Activated B cell treated with CpG ODN at 0.5 μM for 24 hours (primary cell): ENCODE measurements at regions of chr1 and their contacts with region 1.

Region 1: DNA sequence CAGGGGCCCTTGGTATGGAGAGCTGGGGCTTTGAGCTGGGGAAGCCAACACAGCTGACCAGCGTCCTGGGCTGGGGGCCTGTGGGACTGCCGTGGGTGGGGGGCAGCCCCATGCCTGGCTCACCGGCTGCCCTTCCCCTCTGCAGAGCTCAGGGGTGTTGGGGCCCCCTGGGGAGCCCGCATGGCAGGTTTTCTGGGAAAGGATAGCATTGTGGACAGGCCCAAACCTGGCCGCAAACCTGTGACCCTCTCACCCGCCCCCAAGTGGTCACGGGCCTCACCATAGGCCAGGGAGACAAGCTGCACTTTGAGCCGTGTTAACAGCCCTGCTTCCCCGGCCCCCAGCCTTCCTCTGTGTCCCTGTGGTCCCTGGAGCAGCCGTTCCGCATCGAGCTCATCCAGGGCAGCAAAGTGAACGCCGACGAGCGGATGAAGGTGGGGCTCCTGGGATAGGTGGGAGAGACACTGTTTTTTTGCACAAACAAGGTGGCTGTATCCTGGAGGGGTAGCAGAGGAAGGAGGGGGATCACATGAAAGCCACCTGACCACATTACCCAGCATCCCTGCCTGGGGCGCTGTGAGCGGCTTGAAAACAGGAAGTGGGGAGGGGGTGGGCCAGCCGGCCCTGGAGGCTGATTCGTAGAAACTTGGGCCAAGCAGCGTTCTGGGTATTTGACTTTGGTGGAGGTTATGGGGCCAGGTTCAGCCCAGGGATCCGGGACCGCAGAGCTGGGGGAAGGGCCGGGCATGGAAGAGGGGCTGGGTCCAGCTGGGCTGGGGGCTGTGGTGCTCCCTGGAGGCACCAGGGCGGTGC is 65.9 kb downstream of the PIK3CD start:
- DNase-seq: peak; percentile 68
- ATAC-seq: peak; percentile 79
- H3K4me3 Mint-ChIP-seq: peak overlapping the region; percentile 74
- H3K27ac Mint-ChIP-seq: peak overlapping the region; percentile 92
- H3K4me1 Mint-ChIP-seq: peaks cover 50% of the 10 kb centered on the region
- H3K27me3 Mint-ChIP-seq: no peaks in the 10 kb centered on the region
- CTCF ChIP-seq: no peak

Region 2: GRCh38 chr1:9615316-9616063 is 101.9 kb before region 1 on chr1:
- CTCF ChIA-PET with region 1: interaction called, 28 read pairs
- POLR2A ChIA-PET with region 1: no interaction called
- intact Hi-C with region 1: no loop called
- DNase-seq: peak; percentile 47
- ATAC-seq: peak; percentile 96
- H3K4me3 Mint-ChIP-seq: no peak overlapping the region
- H3K27ac Mint-ChIP-seq: no peak overlapping the region
- H3K4me1 Mint-ChIP-seq: peaks cover 4% of the 10 kb centered on the region
- H3K27me3 Mint-ChIP-seq: no peaks in the 10 kb centered on the region
- CTCF ChIP-seq: peak; percentile 43

Region 3: DNA sequence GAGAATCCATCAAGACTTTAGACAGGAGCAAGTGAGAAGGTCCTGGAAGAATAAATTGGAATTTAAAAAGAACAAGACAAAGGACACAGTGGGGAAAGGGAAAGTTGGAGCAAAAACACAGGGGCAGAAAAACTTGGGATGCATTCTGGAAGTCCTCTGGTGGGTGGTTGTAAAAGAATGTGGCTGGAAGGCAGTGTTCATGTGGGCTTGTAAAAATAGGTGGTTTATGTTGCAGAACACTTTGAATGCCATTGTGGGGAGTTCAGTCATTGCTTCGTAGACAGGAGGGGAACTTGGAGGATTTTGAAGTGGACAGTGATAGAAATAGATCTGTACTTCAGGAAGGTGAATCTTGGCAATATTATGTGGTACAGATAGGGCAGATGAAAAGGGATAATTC is 508.2 kb after region 1 on chr1:
- CTCF ChIA-PET with region 1: no interaction called
- POLR2A ChIA-PET with region 1: interaction called, 13 read pairs
- intact Hi-C with region 1: no loop called
- DNase-seq: no peak
- ATAC-seq: no peak
- H3K4me3 Mint-ChIP-seq: no peak overlapping the region
- H3K27ac Mint-ChIP-seq: no peak overlapping the region
- H3K4me1 Mint-ChIP-seq: no peaks in the 10 kb centered on the region
- H3K27me3 Mint-ChIP-seq: no peaks in the 10 kb centered on the region
- CTCF ChIP-seq: no peak